Right lobe of liver (tissue), 6 donors: ENCODE measurements at regions of chr18 and their contacts with region 1.

Region 1: DNA sequence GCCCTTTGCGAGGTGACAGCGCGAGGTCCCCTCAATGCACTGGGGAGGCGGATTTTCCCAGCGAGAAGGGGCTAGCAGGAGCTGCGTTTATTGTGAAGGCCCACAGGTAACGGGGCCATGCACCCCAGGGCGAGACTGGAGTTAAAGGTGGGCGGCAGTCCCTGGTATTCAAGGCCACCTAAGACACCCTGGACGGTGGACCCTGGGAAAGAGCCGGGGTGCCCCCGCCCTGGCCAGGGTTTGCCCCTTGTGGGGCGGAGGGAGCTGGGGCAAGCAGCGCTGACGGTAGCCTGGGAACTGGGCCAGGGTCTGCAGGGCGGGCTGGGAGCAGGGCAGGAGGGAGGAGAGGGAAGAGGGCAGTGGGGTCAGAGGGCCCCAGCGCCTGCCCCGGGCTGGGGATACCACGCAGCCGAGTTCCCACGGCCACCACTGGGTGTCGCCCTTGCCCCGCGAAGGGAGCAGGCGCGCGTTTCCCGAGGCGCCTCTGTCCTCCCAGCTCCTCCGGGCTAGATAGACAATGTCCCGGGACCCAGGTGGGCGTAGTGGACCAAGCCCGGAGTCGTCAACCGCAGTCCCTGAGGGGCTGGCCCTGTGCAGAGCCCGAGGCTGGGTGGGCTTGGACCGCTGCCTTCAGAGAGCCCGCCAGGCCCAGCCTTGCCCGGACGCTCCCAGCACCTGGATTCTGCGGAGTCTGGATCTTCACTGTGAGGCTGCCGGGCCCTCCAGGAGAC is 80.2 kb downstream of the SMAD4 start:
- DNase-seq: peak; percentile 70 to 77 (median 73)
- ATAC-seq: peak; percentile 97 to 99 (median 98)
- H3K4me3 ChIP-seq: no peak overlapping the region
- H3K27ac ChIP-seq: no peak overlapping the region
- H3K4me1 ChIP-seq: no peaks in the 10 kb centered on the region
- H3K27me3 ChIP-seq: no peaks in the 10 kb centered on the region
- CTCF ChIP-seq: peak; percentile 95 to 98 (median 96)
- POLR2A ChIP-seq: no peak

Region 2: GRCh38 chr18:50967714-50968661 is 142.2 kb before region 1 on chr18 and contains the start of gene ELAC1:
- intact Hi-C with region 1: no loop called
- DNase-seq: peak; percentile 83 to 84 (median 84)
- ATAC-seq: peak; percentile 92 to 97 (median 96)
- H3K4me3 ChIP-seq: peak within 1 kb of the TSS; percentile 72 to 93 (median 91)
- H3K27ac ChIP-seq: peak within 1 kb of the TSS; percentile 96 to 98 (median 97)
- H3K4me1 ChIP-seq: peaks cover 0 to 32% (median 15%) of the 10 kb centered on the region in 4 donors
- H3K27me3 ChIP-seq: no peaks in the 10 kb centered on the region
- CTCF ChIP-seq: peak in 1 of 4 donors; percentile 21
- POLR2A ChIP-seq: peak; percentile 98
- total RNA-seq, gene ELAC1: 3.5 to 7.2 (median 4.4) TPM

Region 3: DNA sequence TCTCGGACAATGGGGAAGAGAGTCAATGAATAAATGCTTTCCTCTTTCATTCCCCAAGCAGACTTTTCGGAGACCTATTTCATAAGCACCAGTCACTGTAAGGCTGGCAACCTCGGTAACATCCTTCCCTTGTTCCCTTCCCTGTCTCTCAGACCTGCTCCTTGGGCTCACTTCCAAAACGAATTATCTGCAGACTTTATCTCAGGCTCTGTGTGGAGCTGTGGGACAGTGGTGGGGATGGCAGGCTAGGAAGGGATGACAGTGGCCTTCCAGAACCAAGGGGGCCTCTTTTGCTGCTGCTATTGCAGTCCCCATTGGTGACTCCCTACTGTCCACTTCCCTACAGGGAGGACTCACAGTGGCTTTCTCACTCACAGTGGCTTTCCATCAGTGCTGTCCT is 272.9 kb after region 1 on chr18:
- intact Hi-C with region 1: loop called (anchors 10 kb)
- DNase-seq: no peak
- ATAC-seq: peak in 1 of 4 donors; percentile 17
- H3K4me3 ChIP-seq: no peak overlapping the region
- H3K27ac ChIP-seq: no peak overlapping the region
- H3K4me1 ChIP-seq: no peaks in the 10 kb centered on the region
- H3K27me3 ChIP-seq: no peaks in the 10 kb centered on the region
- CTCF ChIP-seq: no peak
- POLR2A ChIP-seq: no peak